Activated CD8-positive, alpha-beta T cell treated with anti-CD3 and anti-CD28 coated beads for 36 hours (primary cell): ENCODE measurements at regions of chr4 and their contacts with region 1.

Region 1: DNA sequence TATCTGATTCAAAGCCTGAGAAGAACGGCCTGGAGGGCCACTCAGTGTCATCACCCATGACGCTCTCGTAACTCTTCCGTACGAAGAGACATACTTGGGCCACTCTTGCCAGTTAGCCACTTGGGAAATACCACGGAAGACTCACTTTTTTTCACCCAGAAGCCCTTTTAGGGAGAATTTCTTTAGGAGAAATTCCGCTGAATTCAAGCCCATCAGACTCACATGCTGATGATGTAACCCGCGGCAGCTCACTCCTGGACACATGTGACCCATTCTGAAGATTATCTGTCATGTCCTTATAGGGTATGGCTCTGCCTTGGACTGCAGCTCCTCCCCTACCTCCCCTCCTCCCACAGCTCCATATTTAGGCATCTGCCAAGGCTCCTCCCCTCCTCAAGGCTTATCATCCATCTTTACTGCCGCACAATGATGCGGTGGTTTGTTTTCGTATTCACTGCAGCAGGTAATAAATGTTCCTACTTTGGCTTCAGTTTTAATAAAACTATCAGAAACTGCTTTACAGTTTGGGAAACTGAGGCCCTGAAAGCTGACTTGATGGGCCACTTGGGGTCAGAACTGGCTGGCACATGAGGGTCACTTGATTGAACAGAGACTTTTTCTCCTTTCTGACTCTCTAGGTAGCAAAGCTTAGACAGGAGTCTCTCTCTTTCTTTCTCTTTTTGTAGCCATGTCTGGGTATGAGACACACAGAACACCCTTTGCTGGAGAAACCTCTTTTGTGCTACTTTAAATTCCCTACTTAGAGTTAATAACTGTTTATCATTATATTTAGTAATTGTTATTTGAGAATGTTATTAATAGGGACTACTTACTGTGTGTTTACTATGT is 42.1 kb downstream of the RHOH start:
- DNase-seq: peak; percentile 93
- ATAC-seq: peak; percentile 90
- H3K4me3 Mint-ChIP-seq: peak overlapping the region; percentile 81
- H3K27ac Mint-ChIP-seq: peak overlapping the region; percentile 96
- H3K4me1 Mint-ChIP-seq: peaks cover 82% of the 10 kb centered on the region
- H3K27me3 Mint-ChIP-seq: no peaks in the 10 kb centered on the region
- CTCF ChIP-seq: no peak

Region 2: GRCh38 chr4:40003986-40004385 is 234.9 kb before region 1 on chr4:
- CTCF ChIA-PET with region 1: no interaction called
- POLR2A ChIA-PET with region 1: no interaction called
- intact Hi-C with region 1: no loop called
- DNase-seq: no peak
- ATAC-seq: no peak
- H3K4me3 Mint-ChIP-seq: no peak overlapping the region
- H3K27ac Mint-ChIP-seq: no peak overlapping the region
- H3K4me1 Mint-ChIP-seq: no peaks in the 10 kb centered on the region
- H3K27me3 Mint-ChIP-seq: no peaks in the 10 kb centered on the region
- CTCF ChIP-seq: no peak

Region 3: DNA sequence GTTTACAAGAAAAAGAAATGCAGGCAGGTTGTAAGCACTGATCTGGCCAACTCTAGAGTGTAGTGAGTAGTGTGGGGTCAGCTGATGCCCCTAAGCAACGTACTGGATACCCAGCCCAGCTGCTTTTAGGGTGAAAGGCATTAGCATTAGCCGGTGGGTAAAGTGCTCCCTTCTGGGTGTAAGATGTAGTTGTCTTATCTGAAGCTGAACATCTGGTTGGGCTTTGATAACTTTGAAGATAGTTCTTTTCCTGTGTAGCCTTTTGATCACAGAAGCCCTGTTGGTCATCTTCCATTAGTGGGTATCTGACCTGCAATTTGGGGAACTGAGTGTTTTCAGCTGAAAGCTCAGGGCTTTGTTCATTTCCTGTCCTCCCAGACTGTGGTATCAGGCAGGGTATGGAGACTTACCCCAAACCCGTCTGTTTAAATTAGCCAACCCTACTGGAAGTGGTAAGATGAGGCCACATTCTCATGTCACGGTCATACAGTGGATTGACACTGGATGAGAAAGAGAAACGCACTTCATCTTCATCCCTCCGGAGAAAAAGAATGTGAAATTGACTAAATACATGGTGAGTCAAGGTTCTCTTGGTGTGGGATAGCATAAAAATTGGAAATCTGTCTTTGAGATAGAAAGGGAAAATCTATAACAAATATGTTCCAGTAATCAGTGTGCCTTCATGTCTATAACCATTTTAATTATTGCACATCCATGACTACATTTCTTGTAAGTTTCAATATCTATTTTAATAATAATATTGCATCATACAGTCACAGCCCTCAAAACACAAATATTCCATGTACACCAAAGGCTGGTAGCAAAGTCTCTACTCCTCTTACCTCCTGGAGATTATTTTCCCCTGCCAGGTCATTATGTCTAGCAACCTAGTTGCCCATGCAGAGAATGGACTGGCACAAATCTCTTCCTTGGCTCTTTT is 33.4 kb before region 1 on chr4:
- CTCF ChIA-PET with region 1: interaction called, 5 read pairs
- POLR2A ChIA-PET with region 1: interaction called, 295 read pairs
- intact Hi-C with region 1: no loop called
- DNase-seq: peak; percentile 65
- ATAC-seq: peak; percentile 52
- H3K4me3 Mint-ChIP-seq: peak overlapping the region; percentile 99
- H3K27ac Mint-ChIP-seq: peak overlapping the region; percentile 99
- H3K4me1 Mint-ChIP-seq: peaks cover 35% of the 10 kb centered on the region
- H3K27me3 Mint-ChIP-seq: no peaks in the 10 kb centered on the region
- CTCF ChIP-seq: no peak

Region 4: GRCh38 chr4:40212674-40213527 is 26.0 kb before region 1 on chr4:
- CTCF ChIA-PET with region 1: interaction called, 5 read pairs
- POLR2A ChIA-PET with region 1: interaction called, 14 read pairs
- intact Hi-C with region 1: no loop called
- DNase-seq: peak; percentile 4
- ATAC-seq: peak; percentile 24
- H3K4me3 Mint-ChIP-seq: peak overlapping the region; percentile 99
- H3K27ac Mint-ChIP-seq: peak overlapping the region; percentile 96
- H3K4me1 Mint-ChIP-seq: peaks cover 74% of the 10 kb centered on the region
- H3K27me3 Mint-ChIP-seq: no peaks in the 10 kb centered on the region
- CTCF ChIP-seq: no peak

Region 5: DNA sequence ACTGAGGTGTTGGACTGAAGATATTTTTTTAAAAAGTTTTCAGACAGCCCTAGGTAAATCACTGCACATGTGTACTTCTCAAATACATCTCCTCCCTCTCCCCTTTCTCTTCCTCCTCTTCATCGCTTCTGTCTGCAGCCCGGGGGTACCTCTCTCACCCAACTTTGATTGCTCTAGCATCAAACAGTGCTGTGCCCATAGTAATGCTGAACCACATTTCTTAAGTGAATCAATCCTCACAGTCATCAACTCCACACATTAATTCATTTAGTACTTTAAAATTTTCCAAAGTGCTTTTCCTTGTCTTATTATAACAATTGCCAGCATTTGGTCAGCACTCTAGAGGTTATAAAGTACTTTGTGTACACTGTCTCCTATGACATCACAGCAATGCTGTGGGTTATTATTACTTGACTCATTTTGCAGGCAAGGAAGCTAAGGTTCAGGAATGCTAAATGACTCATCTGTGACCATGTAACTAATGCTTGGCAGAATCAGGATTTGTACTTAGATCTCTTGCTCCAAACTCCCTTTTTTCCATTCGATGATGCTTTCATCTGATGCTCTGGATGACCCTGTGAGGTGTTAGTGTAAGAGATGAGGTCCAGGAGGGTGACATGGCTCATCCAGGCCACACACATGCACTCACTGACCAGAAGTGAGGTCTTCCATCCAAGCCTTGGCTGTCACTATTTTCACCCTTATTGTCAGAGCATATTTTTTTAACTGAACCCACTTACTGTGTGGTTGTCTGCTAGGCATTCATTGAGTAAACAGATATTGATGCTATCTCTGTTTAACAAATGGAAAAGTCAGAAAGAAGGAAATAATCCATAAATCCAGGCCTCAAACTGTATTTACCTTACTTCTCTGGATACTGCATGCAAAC is 16.7 kb after region 1 on chr4:
- CTCF ChIA-PET with region 1: interaction called, 3 read pairs
- POLR2A ChIA-PET with region 1: interaction called, 10 read pairs
- intact Hi-C with region 1: no loop called
- DNase-seq: no peak
- ATAC-seq: peak; percentile 15
- H3K4me3 Mint-ChIP-seq: peak overlapping the region; percentile 40
- H3K27ac Mint-ChIP-seq: peak overlapping the region; percentile 82
- H3K4me1 Mint-ChIP-seq: peaks cover 76% of the 10 kb centered on the region
- H3K27me3 Mint-ChIP-seq: no peaks in the 10 kb centered on the region
- CTCF ChIP-seq: no peak